Activated CD4-positive, alpha-beta T cell treated with anti-CD3 and anti-CD28 coated beads for 36 hours (primary cell): ENCODE measurements at regions of chr4 and their contacts with region 1.

Region 1: GRCh38 chr4:150209140-150209829 is 131.0 kb downstream of the DCLK2 start:
- DNase-seq: peak; percentile 61
- ATAC-seq: no peak
- H3K4me3 Mint-ChIP-seq: no peak overlapping the region
- H3K27ac Mint-ChIP-seq: no peak overlapping the region
- H3K4me1 Mint-ChIP-seq: no peaks in the 10 kb centered on the region
- H3K27me3 Mint-ChIP-seq: peaks cover 3% of the 10 kb centered on the region

Region 2: GRCh38 chr4:149980941-149981340 is 228.3 kb before region 1 on chr4:
- CTCF ChIA-PET with region 1: no interaction called
- POLR2A ChIA-PET with region 1: no interaction called
- intact Hi-C with region 1: loop called in 1 of 2 experiments (anchors 1 kb)
- DNase-seq: peak; percentile 72
- ATAC-seq: no peak
- H3K4me3 Mint-ChIP-seq: no peak overlapping the region
- H3K27ac Mint-ChIP-seq: no peak overlapping the region
- H3K4me1 Mint-ChIP-seq: peaks cover under 1% of the 10 kb centered on the region
- H3K27me3 Mint-ChIP-seq: peaks cover 2% of the 10 kb centered on the region

Region 3: GRCh38 chr4:149999485-150000074 is 209.7 kb before region 1 on chr4:
- CTCF ChIA-PET with region 1: no interaction called
- POLR2A ChIA-PET with region 1: no interaction called
- intact Hi-C with region 1: loop called in 1 of 2 experiments (anchors 5 kb)
- DNase-seq: peak; percentile 15
- ATAC-seq: no peak
- H3K4me3 Mint-ChIP-seq: no peak overlapping the region
- H3K27ac Mint-ChIP-seq: no peak overlapping the region
- H3K4me1 Mint-ChIP-seq: peaks cover 6% of the 10 kb centered on the region
- H3K27me3 Mint-ChIP-seq: peaks cover 10% of the 10 kb centered on the region

Region 4: GRCh38 chr4:150010525-150011126 is 198.7 kb before region 1 on chr4:
- CTCF ChIA-PET with region 1: no interaction called
- POLR2A ChIA-PET with region 1: no interaction called
- intact Hi-C with region 1: loop called in 1 of 2 experiments (anchors 5 kb)
- DNase-seq: peak; percentile 19
- ATAC-seq: no peak
- H3K4me3 Mint-ChIP-seq: no peak overlapping the region
- H3K27ac Mint-ChIP-seq: no peak overlapping the region
- H3K4me1 Mint-ChIP-seq: no peaks in the 10 kb centered on the region
- H3K27me3 Mint-ChIP-seq: peaks cover 15% of the 10 kb centered on the region